ENCODE measurements at regions of chr10 and their contacts with region 1.

Region 1: DNA sequence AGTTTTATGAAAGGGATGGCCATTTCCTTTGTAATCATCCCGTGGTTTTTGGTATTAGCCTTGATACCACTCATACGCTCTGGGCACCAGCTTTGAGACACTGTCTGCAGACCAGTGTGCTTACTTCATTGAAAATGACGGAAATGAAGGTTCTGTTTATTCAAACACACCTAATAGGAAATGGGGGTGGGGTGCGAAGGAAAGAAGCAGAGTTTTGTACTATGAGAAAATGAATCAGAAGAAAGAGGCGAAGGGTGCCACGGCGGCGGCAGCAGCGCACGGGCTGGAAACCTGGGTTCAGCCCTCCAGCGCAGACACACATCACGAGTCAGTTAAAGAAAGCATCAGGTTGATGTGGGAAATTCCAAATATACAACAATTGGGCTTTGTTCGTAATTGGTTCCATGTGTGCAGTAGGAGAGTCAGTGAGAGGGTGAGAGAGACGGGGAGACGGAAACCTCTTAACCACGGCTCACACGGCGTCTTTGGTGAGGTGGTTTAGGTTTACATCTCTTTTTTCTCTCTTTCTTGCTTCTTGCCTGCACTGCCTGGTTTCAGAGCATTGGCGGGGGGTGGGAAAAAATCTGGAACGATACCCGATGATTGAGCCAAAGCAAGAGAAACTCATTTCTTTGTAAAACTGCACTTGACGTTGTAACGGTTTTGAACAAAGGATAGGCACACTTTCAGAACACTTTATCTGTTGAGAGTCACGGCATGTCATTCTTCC is 321.2 kb downstream of the FRMD4A start:
- DNase-seq: peak; percentile 96
- ATAC-seq: peak; percentile 75
- H3K4me3 ChIP-seq: peak overlapping the region; percentile 25; the same call in 1 of the 2 replicates
- H3K27ac ChIP-seq: peak overlapping the region; percentile 72
- H3K4me1 ChIP-seq: peaks cover 11% of the 10 kb centered on the region
- H3K27me3 ChIP-seq: peaks cover 0 to 3% of the 10 kb centered on the region in 2 experiments; a peak in 1 of 4 replicates
- CTCF ChIP-seq: no peak
- EP300 ChIP-seq: peak; percentile 49 to 84; a peak in 3 of 4 replicates
- POLR2A ChIP-seq: no peak
- RAD21 ChIP-seq: no peak

Region 2: DNA sequence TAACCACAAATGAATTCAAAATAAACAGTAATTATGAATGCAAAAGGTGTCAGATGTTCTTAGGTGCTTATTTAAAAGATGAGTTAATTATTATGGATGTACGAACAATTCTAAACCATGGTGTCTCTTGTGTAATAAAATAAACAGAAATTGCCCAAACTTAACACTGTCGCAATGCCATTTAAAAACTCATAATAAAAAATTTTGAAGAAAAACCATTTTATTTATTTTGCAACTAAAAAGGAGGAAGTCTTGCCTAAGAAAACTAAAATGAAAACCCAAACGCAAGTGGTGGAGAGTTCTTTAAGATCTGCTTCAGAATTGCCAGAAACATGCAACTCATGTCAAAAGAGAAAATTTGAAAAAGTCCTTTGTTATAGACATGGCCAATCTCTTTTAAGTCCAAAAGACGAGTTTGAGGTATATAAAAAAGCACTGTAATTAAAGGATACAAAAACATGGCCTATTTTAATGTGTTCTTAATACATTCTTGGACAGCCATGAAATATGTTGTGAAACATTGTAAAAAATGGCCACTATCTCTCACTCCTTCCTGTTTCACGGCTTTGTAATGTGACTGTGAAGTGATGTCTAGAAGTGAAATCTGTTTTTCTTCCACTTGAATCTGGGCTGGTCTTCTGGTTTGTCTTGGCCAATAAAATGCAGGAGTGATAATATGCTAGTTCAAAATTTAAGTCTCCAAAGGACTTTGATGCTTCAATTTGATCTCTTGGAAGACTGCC is 99.8 kb before region 1 on chr10:
- CTCF ChIA-PET with region 1: interaction called, 5 read pairs
- POLR2A ChIA-PET with region 1: no interaction called
- RAD21 ChIA-PET with region 1: no interaction called
- SMC1A ChIA-PET with region 1: interaction called, 3 read pairs
- in situ Hi-C with region 1: no loop called
- intact Hi-C with region 1: loop called (anchors 5 kb)
- DNase-seq: no peak
- ATAC-seq: no peak
- H3K4me3 ChIP-seq: no peak overlapping the region
- H3K27ac ChIP-seq: no peak overlapping the region
- H3K4me1 ChIP-seq: peaks cover 15% of the 10 kb centered on the region
- H3K27me3 ChIP-seq: no peaks in the 10 kb centered on the region
- CTCF ChIP-seq: no peak
- EP300 ChIP-seq: no peak
- POLR2A ChIP-seq: no peak
- RAD21 ChIP-seq: no peak

Region 3: GRCh38 chr10:13942032-13942431 is 67.5 kb before region 1 on chr10:
- CTCF ChIA-PET with region 1: no interaction called
- POLR2A ChIA-PET with region 1: no interaction called
- RAD21 ChIA-PET with region 1: interaction called, 3 read pairs
- SMC1A ChIA-PET with region 1: interaction called, 5 read pairs
- in situ Hi-C with region 1: no loop called
- intact Hi-C with region 1: loop called (anchors 5 kb)
- DNase-seq: peak; percentile 82
- ATAC-seq: peak; percentile 97
- H3K4me3 ChIP-seq: no peak overlapping the region
- H3K27ac ChIP-seq: no peak overlapping the region
- H3K4me1 ChIP-seq: peaks cover 2% of the 10 kb centered on the region; the same call in 1 of the 2 replicates
- H3K27me3 ChIP-seq: no peaks in the 10 kb centered on the region
- CTCF ChIP-seq: no peak
- EP300 ChIP-seq: peak in 1 of 2 experiments; percentile 39; a peak in 2 of 4 replicates
- POLR2A ChIP-seq: no peak
- RAD21 ChIP-seq: no peak

Region 4: GRCh38 chr10:14039968-14040671 is 30.6 kb after region 1 on chr10:
- CTCF ChIA-PET with region 1: interaction called, 4 read pairs
- POLR2A ChIA-PET with region 1: interaction called, 3 read pairs
- RAD21 ChIA-PET with region 1: interaction called, 7 read pairs
- SMC1A ChIA-PET with region 1: interaction called, 10 read pairs
- in situ Hi-C with region 1: no loop called
- intact Hi-C with region 1: no loop called
- DNase-seq: no peak
- ATAC-seq: no peak
- H3K4me3 ChIP-seq: no peak overlapping the region
- H3K27ac ChIP-seq: no peak overlapping the region
- H3K4me1 ChIP-seq: peaks cover 5% of the 10 kb centered on the region; the same call in 1 of the 2 replicates
- H3K27me3 ChIP-seq: no peaks in the 10 kb centered on the region
- CTCF ChIP-seq: no peak
- EP300 ChIP-seq: no peak
- POLR2A ChIP-seq: no peak
- RAD21 ChIP-seq: no peak

Region 5: DNA sequence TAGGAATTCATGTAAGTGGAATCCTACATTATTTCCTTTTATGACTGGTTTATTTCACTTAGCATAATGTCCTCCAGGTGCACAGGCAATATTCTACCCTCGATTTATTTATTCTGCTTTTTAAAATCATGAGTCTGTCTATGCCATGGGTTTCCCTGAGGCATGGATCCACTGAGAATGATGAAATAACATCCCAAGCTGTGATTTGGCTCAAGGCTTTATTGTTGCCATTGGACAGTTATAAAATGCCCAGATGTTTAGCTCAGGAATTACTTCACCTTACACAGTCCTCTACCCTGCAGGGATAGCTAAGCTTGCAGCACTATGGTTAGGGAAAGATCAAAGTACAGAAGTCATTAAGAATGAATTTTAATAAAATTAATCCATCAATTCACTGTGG is 101.7 kb after region 1 on chr10:
- CTCF ChIA-PET with region 1: no interaction called
- POLR2A ChIA-PET with region 1: no interaction called
- RAD21 ChIA-PET with region 1: no interaction called
- SMC1A ChIA-PET with region 1: no interaction called
- in situ Hi-C with region 1: no loop called
- intact Hi-C with region 1: no loop called
- DNase-seq: no peak
- ATAC-seq: no peak
- H3K4me3 ChIP-seq: no peak overlapping the region
- H3K27ac ChIP-seq: no peak overlapping the region
- H3K4me1 ChIP-seq: no peaks in the 10 kb centered on the region
- H3K27me3 ChIP-seq: no peaks in the 10 kb centered on the region; a peak in 1 of 4 replicates
- CTCF ChIP-seq: no peak
- EP300 ChIP-seq: no peak
- POLR2A ChIP-seq: no peak
- RAD21 ChIP-seq: no peak

Region 6: DNA sequence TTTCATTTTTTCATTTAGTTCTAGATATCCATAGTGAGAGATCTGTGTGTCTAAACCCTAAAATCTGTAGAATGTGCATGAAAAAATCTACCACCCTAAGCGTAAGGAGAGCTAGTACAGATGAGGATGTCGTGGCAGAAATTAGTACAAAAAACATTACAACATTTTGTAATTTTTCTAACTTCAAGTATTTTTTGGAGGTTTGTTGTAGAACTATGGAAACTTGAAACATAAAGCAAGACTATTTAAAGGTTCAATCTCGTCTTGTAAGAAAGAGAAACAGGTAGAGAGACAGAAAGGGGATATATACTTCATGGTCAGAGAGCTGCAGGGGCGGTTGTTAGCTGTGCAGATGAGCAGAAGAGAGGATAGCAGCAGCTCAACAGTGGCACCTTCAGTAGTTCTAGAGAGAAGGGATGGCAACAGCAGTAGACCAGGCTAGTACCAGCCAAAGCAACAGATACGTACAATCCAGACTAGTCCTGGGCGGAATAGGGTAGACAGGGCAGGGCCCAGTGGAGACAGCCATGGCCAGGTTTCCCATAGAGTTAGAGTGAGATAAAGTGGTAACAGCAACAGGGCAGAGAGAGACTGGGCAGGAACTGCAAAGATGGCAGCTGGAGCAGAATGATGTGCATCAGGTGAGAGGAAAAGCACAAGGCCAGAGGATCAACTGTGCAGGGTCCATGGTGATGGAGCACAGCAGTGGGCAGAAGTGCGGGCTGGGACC is 175.9 kb after region 1 on chr10:
- CTCF ChIA-PET with region 1: no interaction called
- POLR2A ChIA-PET with region 1: interaction called, 10 read pairs
- RAD21 ChIA-PET with region 1: interaction called, 9 read pairs
- SMC1A ChIA-PET with region 1: no interaction called
- in situ Hi-C with region 1: no loop called
- intact Hi-C with region 1: loop called (anchors 2 kb)
- DNase-seq: peak; percentile 86
- ATAC-seq: peak; percentile 94
- H3K4me3 ChIP-seq: 0 out of 2 replicates have a peak overlapping the region, but pooled peaks have one; percentile 63
- H3K27ac ChIP-seq: peak overlapping the region; percentile 75
- H3K4me1 ChIP-seq: peaks cover 10% of the 10 kb centered on the region
- H3K27me3 ChIP-seq: peaks cover 0 to 3% of the 10 kb centered on the region in 2 experiments; a peak in 2 of 4 replicates
- CTCF ChIP-seq: peak in 2 of 3 experiments; percentile 13 to 27; a peak in 3 of 6 replicates
- EP300 ChIP-seq: no peak
- POLR2A ChIP-seq: peak; percentile 99
- RAD21 ChIP-seq: no peak